A549 (cell line): ENCODE measurements at regions of chr5 and their contacts with region 1.

Region 1: DNA sequence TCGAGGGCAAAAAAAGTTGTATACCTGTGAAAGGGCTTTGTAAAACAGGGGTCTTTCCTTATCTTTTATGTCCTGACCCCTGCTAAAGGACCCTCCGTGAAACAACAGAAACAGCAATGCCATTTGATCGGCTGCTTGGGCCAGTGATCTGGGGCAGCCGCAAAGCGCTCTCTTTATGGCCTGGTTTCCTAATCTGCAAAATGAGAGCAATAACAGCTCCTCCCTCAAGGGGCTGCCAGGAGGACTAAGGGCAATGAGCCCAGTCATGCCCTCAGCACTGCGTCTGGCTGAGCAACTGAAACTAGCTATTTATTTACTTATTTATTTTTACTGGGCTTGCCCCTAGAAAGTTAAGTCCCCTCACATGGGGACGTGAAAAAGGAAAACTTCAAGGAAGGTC is 18.4 kb downstream of the CMBL start:
- DNase-seq: no peak
- ATAC-seq: peak; percentile 57 to 58; a peak in 4 of 6 replicates
- H3K4me3 ChIP-seq: no peak overlapping the region
- H3K27ac ChIP-seq: no peak overlapping the region
- H3K4me1 ChIP-seq: peaks cover 5% of the 10 kb centered on the region; the same call in 1 of the 3 replicates
- CTCF ChIP-seq: no peak
- EP300 ChIP-seq: no peak
- POLR2A ChIP-seq: no peak
- RAD21 ChIP-seq: no peak

Region 2: DNA sequence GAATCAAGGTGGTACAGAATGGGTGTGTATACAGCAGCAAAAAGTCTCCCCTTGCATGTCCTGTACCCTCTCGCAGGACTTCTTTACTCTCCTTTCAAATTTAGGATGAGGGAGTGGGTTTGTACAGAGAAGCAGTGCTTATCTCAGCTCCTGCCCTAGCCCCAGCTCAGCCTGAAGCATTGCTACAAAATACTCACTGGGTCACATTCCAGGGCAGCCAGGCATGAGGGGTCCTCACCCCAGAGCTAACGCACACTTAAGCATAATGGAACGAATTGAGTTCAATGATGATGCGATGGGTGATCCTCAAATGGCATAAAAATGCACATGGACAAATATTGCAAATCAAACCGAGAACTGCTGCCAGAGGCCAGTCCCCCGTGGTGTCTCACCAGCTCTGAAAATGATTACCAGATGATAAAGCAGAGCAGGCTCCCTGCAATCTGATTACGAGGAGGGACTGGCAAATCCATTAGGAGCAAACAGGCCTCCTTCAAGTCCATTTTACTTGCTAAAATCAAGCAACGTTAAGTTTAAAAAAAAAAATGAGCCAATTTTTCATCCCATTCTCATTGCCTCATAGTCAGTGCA is 427.6 kb before region 1 on chr5:
- CTCF ChIA-PET with region 1: no interaction called
- POLR2A ChIA-PET with region 1: no interaction called
- DNase-seq: no peak
- ATAC-seq: no peak
- H3K4me3 ChIP-seq: no peak overlapping the region
- H3K27ac ChIP-seq: no peak overlapping the region
- H3K4me1 ChIP-seq: no peaks in the 10 kb centered on the region
- CTCF ChIP-seq: no peak
- EP300 ChIP-seq: no peak
- POLR2A ChIP-seq: no peak
- RAD21 ChIP-seq: no peak

Region 3: GRCh38 chr5:10424124-10424731 is 134.9 kb after region 1 on chr5:
- CTCF ChIA-PET with region 1: interaction called, 65 read pairs
- POLR2A ChIA-PET with region 1: no interaction called
- DNase-seq: peak; percentile 46 to 59
- ATAC-seq: peak; percentile 87 to 91
- H3K4me3 ChIP-seq: no peak overlapping the region
- H3K27ac ChIP-seq: no peak overlapping the region
- H3K4me1 ChIP-seq: peaks cover 21% of the 10 kb centered on the region
- CTCF ChIP-seq: peak; percentile 66
- EP300 ChIP-seq: no peak
- POLR2A ChIP-seq: no peak
- RAD21 ChIP-seq: peak; percentile 69

Region 4: DNA sequence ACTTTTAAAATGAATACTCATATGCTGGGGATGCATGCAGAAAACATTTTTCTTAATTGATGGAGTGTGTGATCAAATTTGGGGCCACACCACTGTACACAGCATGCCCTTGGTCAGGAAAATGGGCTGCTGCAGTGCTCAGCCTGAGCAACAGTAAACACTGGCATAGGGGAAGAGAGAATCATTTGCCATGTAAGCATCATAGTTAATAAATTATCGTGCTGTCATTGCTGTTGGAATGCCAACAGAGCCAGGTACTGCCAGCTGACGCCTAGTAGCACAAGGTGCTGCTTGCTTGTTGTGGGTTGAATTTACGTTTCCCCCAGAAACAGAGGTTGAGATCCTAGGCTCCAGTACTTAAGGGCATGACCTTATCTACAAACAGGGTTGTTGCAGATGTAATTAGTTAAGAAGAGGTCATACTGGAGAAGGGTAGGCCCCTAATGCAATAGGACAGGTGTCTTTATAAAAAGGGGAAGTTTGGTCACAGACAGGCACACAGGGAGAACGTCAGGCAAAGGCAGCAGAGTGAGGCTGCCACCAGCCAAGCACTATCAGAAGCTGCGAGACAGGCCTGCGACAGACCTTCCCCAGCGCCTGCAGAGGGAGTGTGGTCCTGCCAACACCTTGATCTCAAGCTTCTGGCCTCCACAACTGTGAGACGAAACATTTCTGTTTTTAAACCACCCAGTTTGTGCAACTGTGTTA is 446.4 kb after region 1 on chr5:
- CTCF ChIA-PET with region 1: no interaction called
- POLR2A ChIA-PET with region 1: no interaction called
- DNase-seq: no peak
- ATAC-seq: no peak
- H3K4me3 ChIP-seq: no peak overlapping the region
- H3K27ac ChIP-seq: no peak overlapping the region
- H3K4me1 ChIP-seq: no peaks in the 10 kb centered on the region
- CTCF ChIP-seq: no peak
- EP300 ChIP-seq: no peak
- POLR2A ChIP-seq: no peak
- RAD21 ChIP-seq: no peak